A673 (cell line): ENCODE measurements at regions of chr18 and their contacts with region 1.

Region 1: DNA sequence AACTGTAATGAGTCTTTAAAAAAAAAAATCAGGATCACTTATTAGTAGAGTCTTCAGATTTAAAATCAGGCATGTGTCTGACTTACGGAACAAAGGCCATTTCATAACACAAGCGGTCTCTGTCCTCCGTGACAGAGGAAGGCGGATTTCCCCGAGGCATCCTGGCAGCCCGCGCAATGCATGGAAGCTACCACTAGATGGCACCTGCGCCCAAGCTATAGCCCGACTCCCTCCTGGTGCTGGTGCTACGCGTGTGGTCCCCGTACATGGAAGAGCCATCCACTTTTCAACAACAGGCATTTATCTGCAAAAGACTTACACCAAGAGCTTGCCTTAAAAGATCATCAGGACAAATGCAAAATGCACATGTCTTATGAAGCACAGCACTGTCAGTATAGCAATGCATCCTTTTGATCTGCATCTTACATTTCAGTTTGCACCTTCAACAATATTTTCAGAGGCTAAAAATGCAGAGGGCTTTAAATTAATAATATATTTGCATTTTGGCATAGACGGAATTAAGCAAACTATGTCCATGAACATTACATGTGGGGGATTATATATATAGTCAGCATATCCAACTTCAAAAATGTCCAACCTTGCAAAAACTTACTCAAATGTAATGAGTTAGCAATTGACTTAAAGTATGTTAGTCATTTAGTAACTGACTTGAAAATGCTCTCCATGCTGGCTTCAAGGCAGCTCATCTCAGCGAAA is 96.0 kb downstream of the ZNF516 start:
- DNase-seq: peak; percentile 78
- H3K4me3 ChIP-seq: no peak overlapping the region
- H3K27ac ChIP-seq: no peak overlapping the region
- H3K4me1 ChIP-seq: no peaks in the 10 kb centered on the region
- H3K27me3 ChIP-seq: no peaks in the 10 kb centered on the region
- CTCF ChIP-seq: peak; percentile 99

Region 2: GRCh38 chr18:76620321-76621170 is 221.5 kb after region 1 on chr18:
- CTCF ChIA-PET with region 1: interaction called, 4 read pairs
- POLR2A ChIA-PET with region 1: no interaction called
- intact Hi-C with region 1: loop called (anchors 2 kb)
- DNase-seq: peak; percentile 82
- H3K4me3 ChIP-seq: peak overlapping the region; percentile 27
- H3K27ac ChIP-seq: peak overlapping the region; percentile 39
- H3K4me1 ChIP-seq: peaks cover 26% of the 10 kb centered on the region
- H3K27me3 ChIP-seq: no peaks in the 10 kb centered on the region
- CTCF ChIP-seq: peak; percentile 62

Region 3: GRCh38 chr18:76686737-76687262 is 287.7 kb after region 1 on chr18:
- CTCF ChIA-PET with region 1: interaction called, 6 read pairs
- POLR2A ChIA-PET with region 1: no interaction called
- intact Hi-C with region 1: loop called (anchors 2 kb)
- DNase-seq: peak; percentile 75
- H3K4me3 ChIP-seq: no peak overlapping the region
- H3K27ac ChIP-seq: no peak overlapping the region
- H3K4me1 ChIP-seq: peaks cover 10% of the 10 kb centered on the region
- H3K27me3 ChIP-seq: no peaks in the 10 kb centered on the region
- CTCF ChIP-seq: peak; percentile 79

Region 4: GRCh38 chr18:76709659-76710645 is 310.9 kb after region 1 on chr18:
- CTCF ChIA-PET with region 1: interaction called, 19 read pairs
- POLR2A ChIA-PET with region 1: no interaction called
- intact Hi-C with region 1: loop called (anchors 1 kb)
- DNase-seq: peak; percentile 83
- H3K4me3 ChIP-seq: no peak overlapping the region
- H3K27ac ChIP-seq: no peak overlapping the region
- H3K4me1 ChIP-seq: no peaks in the 10 kb centered on the region
- H3K27me3 ChIP-seq: no peaks in the 10 kb centered on the region
- CTCF ChIP-seq: peak; percentile 94

Region 5: GRCh38 chr18:76982841-76983587 is 584.0 kb after region 1 on chr18:
- CTCF ChIA-PET with region 1: no interaction called
- POLR2A ChIA-PET with region 1: no interaction called
- intact Hi-C with region 1: loop called (anchors 10 kb)
- DNase-seq: peak; percentile 76
- H3K4me3 ChIP-seq: no peak overlapping the region
- H3K27ac ChIP-seq: no peak overlapping the region
- H3K4me1 ChIP-seq: no peaks in the 10 kb centered on the region
- H3K27me3 ChIP-seq: no peaks in the 10 kb centered on the region
- CTCF ChIP-seq: peak; percentile 92